Ascending aorta (tissue), 2 donors: ENCODE measurements at regions of chr11 and their contacts with region 1.

Region 1: DNA sequence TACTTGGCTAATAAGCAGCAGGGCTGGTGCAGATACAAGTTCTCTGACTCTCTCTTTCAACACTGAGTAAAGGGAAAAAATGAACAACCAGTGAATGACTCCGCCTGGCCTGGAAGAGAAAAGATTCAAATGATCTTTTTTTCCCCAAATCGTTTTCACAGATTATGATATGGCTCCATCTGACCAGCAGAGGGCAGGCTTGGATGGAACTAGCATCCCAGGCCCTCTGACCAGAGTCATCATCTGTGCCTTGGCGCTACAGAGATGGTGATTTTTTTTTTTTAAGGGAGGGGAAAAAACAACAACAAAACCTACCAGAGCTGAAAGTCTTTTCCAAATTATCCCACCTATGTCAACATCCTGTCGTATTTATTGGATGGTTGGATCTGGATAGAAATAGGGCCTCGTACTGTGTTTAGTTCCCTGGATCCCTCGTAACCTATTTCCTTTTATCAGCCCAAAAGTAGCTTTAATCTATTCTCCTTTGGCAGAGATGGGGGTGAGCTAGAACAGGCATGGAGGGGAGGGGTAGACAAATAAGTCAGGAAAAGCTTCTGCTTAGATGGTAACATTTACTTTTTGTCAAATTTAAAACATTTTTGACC is 69.7 kb downstream of the PRSS23 start:
- DNase-seq: peak in 1 of 2 donors; percentile 85
- H3K4me3 ChIP-seq: peak overlapping the region in 1 of 2 donors; percentile 20
- H3K27ac ChIP-seq: peak overlapping the region; percentile 29 to 47
- H3K4me1 ChIP-seq: no peaks in the 10 kb centered on the region
- H3K27me3 ChIP-seq: no peaks in the 10 kb centered on the region
- CTCF ChIP-seq: peak; percentile 73 to 80 (median 77)

Region 2: DNA sequence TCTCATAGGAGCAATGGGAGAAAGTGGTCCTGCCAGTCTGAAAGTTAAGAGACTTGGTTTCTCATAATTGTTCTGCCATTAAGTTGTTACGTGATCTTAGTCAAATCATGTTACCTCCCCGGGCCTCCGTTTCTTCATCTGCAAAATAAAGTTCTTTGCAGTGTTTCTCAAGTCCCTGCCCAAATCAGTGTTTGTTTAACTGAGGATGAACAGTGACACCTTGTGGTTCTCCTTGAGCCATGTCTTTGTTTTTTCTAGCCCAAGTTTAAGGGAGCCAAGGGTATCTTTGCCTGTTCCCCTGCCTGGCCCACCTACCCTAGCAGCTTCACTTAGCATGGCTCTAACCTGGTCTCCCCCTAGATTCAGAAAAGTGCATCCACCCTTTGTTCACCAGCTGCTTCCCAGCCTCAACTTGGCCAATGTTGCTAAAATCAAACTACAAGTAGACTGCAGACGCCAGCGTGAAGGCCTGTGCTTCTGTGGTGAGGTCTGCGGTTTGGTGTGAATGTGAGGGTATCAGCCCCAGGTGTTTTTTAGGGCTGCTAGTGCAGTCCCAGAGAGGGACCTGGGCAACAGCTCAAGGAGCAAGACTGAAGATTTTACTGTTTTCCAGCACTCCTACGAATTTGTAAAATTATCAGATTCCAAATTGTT is 49.6 kb after region 1 on chr11:
- intact Hi-C with region 1: loop called (anchors 1 kb)
- DNase-seq: no peak
- H3K4me3 ChIP-seq: peak overlapping the region in 1 of 2 donors; percentile 6
- H3K27ac ChIP-seq: peak overlapping the region; percentile 85 to 89
- H3K4me1 ChIP-seq: peaks cover 8 to 57% of the 10 kb centered on the region in 2 donors
- H3K27me3 ChIP-seq: no peaks in the 10 kb centered on the region
- CTCF ChIP-seq: peak; percentile 52 to 65 (median 59)

Region 3: DNA sequence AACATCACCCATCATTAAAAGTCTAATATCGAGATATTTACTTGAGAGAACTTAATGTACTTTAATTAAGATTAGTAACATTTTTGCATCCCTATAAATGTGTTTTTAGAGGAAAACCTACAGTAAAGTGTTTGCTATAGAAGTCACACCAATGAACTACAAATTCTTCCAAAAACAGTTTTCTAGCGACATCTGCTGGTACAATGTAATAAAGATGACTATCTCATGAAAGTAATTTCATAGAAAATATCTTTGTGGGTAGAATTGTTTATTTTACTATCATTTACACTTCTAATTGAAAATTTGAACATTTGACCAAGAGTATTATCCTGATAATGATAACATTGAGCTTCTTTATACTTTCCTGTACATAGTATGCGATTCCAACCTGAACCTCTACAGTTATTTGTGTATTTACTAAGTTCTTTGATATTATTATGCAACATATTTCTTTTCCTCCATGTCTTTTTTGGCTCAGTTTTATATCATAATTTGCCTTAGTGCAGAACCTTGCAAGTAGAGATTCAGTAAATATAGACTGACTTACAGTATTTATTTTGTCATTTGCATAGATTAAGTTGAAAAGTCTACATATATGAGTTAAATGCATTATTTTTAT is 420.3 kb after region 1 on chr11:
- intact Hi-C with region 1: loop called (anchors 2 kb)
- DNase-seq: no peak
- H3K4me3 ChIP-seq: no peak overlapping the region
- H3K27ac ChIP-seq: no peak overlapping the region
- H3K4me1 ChIP-seq: peaks cover 0 to 2% of the 10 kb centered on the region in 2 donors
- H3K27me3 ChIP-seq: no peaks in the 10 kb centered on the region
- CTCF ChIP-seq: peak; percentile 52 to 71 (median 52)

Region 4: DNA sequence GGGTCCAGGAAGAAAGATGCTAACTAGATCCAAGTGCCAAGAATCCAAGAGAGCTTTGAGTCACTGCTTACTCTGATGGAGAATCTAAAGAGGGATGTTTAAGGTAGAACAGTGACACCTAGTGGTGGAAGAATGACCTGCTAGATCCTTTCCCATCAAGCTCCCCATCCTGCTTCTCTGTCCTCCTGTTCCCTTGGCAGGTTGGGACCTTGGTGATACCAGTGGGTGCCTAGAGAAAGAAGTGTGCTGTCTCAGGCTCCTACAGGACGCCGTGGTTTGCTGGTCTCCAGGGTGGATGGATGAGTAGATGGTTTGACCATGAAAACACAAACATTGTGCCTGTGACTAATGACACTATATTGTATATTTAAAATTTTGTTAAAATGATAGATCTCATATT is 551.4 kb after region 1 on chr11:
- intact Hi-C with region 1: loop called (anchors 5 kb)
- DNase-seq: peak in 1 of 2 donors; percentile 70
- H3K4me3 ChIP-seq: no peak overlapping the region
- H3K27ac ChIP-seq: no peak overlapping the region
- H3K4me1 ChIP-seq: peaks cover 3 to 9% of the 10 kb centered on the region in 2 donors
- H3K27me3 ChIP-seq: no peaks in the 10 kb centered on the region
- CTCF ChIP-seq: peak; percentile 61 to 75 (median 70)